ENCODE measurements at regions of chr17 and their contacts with region 1.

Region 1: GRCh38 chr17:33200587-33200986 is 92.5 kb downstream of the ASIC2 start:
- DNase-seq: no peak
- ATAC-seq: no peak
- H3K4me3 ChIP-seq: no peak overlapping the region
- H3K27ac ChIP-seq: no peak overlapping the region
- H3K4me1 ChIP-seq: no peaks in the 10 kb centered on the region
- H3K27me3 ChIP-seq: peaks cover 0 to 41% (median 0%) of the 10 kb centered on the region in 9 donors
- CTCF ChIP-seq: no peak
- POLR2A ChIP-seq: no peak

Region 2: GRCh38 chr17:33267260-33267790 is 66.7 kb after region 1 on chr17:
- intact Hi-C with region 1: loop called in 1 of 10 experiments (anchors 10 kb)
- DNase-seq: no peak
- ATAC-seq: no peak
- H3K4me3 ChIP-seq: no peak overlapping the region
- H3K27ac ChIP-seq: no peak overlapping the region
- H3K4me1 ChIP-seq: no peaks in the 10 kb centered on the region
- H3K27me3 ChIP-seq: peaks cover 0 to 22% (median 0%) of the 10 kb centered on the region in 9 donors
- CTCF ChIP-seq: no peak
- POLR2A ChIP-seq: no peak

Measured in heart left ventricle (tissue), 16 donors.